ENCODE measurements at regions of chr10 and their contacts with region 1.

Region 1: GRCh38 chr10:119680050-119680449 is 28.9 kb downstream of the BAG3 start:
- DNase-seq: peak; percentile 99
- H3K4me3 Mint-ChIP-seq: peak overlapping the region; percentile 72
- H3K27ac Mint-ChIP-seq: peak overlapping the region; percentile 92
- H3K4me1 Mint-ChIP-seq: peaks cover 28% of the 10 kb centered on the region
- H3K27me3 Mint-ChIP-seq: no peaks in the 10 kb centered on the region
- CTCF ChIP-seq: no peak

Region 2: GRCh38 chr10:119608316-119609155 is 71.5 kb before region 1 on chr10:
- CTCF ChIA-PET with region 1: interaction called, 6 read pairs
- POLR2A ChIA-PET with region 1: interaction called, 5 read pairs
- intact Hi-C with region 1: loop called (anchors 1 kb)
- DNase-seq: peak; percentile 66
- H3K4me3 Mint-ChIP-seq: no peak overlapping the region
- H3K27ac Mint-ChIP-seq: no peak overlapping the region
- H3K4me1 Mint-ChIP-seq: peaks cover 5% of the 10 kb centered on the region
- H3K27me3 Mint-ChIP-seq: no peaks in the 10 kb centered on the region
- CTCF ChIP-seq: peak; percentile 58

Region 3: DNA sequence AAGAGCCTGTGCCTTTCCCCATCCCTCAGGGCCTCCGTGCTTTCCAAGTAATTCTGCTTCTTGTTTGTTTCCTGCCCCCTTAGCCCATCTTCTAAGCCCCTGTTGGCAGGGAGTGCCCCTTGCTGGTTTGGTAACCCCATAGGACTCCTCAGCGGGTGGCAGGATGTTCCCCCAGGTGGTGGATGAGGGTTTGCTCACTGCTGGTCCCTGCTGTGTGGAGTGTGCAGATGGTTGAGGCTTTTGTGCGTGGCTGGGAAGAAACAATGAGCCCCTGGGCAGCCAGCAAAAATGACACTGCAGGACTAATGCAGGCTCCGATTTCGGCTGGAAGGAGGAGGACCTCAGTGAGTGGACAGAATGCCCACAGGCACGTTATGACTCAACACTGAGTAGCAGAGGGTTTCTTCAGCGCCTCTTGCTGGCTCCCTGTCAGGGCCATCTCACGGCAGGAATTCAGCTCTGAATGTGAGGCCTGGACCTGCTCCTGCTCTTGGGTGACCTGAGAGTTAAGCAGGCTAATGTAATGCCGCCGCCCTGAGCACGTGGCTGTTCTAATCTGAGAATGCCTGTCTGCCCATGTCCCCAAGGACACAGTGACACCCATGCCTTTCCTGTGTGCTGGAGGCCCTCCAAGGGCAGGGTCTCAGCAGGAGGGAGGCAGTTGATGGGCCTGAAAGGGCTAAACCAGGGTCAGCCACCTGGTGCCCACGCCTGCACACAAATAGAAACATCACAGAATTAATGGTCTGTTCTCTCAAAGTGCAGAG is 12.3 kb before region 1 on chr10:
- CTCF ChIA-PET with region 1: interaction called, 8 read pairs
- POLR2A ChIA-PET with region 1: interaction called, 752 read pairs
- intact Hi-C with region 1: no loop called
- DNase-seq: peak; percentile 98
- H3K4me3 Mint-ChIP-seq: peak overlapping the region; percentile 59
- H3K27ac Mint-ChIP-seq: peak overlapping the region; percentile 93
- H3K4me1 Mint-ChIP-seq: peaks cover 54% of the 10 kb centered on the region
- H3K27me3 Mint-ChIP-seq: no peaks in the 10 kb centered on the region
- CTCF ChIP-seq: no peak

Region 4: GRCh38 chr10:119737827-119738226 is 57.8 kb after region 1 on chr10:
- CTCF ChIA-PET with region 1: interaction called, 6 read pairs
- POLR2A ChIA-PET with region 1: interaction called, 68 read pairs
- intact Hi-C with region 1: no loop called
- DNase-seq: peak; percentile 81
- H3K4me3 Mint-ChIP-seq: peak overlapping the region; percentile 68
- H3K27ac Mint-ChIP-seq: peak overlapping the region; percentile 86
- H3K4me1 Mint-ChIP-seq: peaks cover 18% of the 10 kb centered on the region
- H3K27me3 Mint-ChIP-seq: no peaks in the 10 kb centered on the region
- CTCF ChIP-seq: no peak

Region 5: DNA sequence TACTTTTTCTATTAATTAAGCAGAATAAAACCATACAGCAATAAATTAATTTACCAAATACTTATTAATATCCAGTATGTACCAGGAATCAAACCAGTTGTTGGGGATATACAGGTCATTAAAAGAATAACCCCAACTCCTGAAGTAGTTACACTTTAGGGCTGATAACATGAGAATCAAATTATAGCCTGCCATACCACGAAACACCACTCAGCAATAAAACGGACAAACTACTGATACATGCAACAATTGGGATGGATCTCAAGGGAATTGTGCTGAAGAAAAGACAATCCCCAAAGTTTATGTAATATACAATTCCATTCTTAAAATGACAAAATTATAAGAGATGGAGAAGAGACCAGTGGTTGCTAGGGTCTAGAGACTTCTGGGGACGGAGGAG is 169.9 kb after region 1 on chr10:
- CTCF ChIA-PET with region 1: no interaction called
- POLR2A ChIA-PET with region 1: no interaction called
- intact Hi-C with region 1: loop called (anchors 2 kb)
- DNase-seq: no peak
- H3K4me3 Mint-ChIP-seq: no peak overlapping the region
- H3K27ac Mint-ChIP-seq: no peak overlapping the region
- H3K4me1 Mint-ChIP-seq: peaks cover 6% of the 10 kb centered on the region
- H3K27me3 Mint-ChIP-seq: no peaks in the 10 kb centered on the region
- CTCF ChIP-seq: no peak

Region 6: GRCh38 chr10:119872860-119873681 is 193.0 kb after region 1 on chr10:
- CTCF ChIA-PET with region 1: no interaction called
- POLR2A ChIA-PET with region 1: interaction called, 31 read pairs
- intact Hi-C with region 1: no loop called
- DNase-seq: peak; percentile 77
- H3K4me3 Mint-ChIP-seq: peak overlapping the region; percentile 87
- H3K27ac Mint-ChIP-seq: peak overlapping the region; percentile 59
- H3K4me1 Mint-ChIP-seq: peaks cover 28% of the 10 kb centered on the region
- H3K27me3 Mint-ChIP-seq: no peaks in the 10 kb centered on the region
- CTCF ChIP-seq: no peak